Panc1 (cell line): ENCODE measurements at regions of chr3 and their contacts with region 1.

Region 1: GRCh38 chr3:159848348-159849118 is 140.1 kb upstream of the IL12A start:
- DNase-seq: no peak
- ATAC-seq: no peak
- H3K4me3 ChIP-seq: no peak overlapping the region
- H3K27ac ChIP-seq: no peak overlapping the region
- H3K4me1 ChIP-seq: peaks cover 16% of the 10 kb centered on the region
- H3K27me3 ChIP-seq: no peaks in the 10 kb centered on the region
- CTCF ChIP-seq: no peak

Region 2: DNA sequence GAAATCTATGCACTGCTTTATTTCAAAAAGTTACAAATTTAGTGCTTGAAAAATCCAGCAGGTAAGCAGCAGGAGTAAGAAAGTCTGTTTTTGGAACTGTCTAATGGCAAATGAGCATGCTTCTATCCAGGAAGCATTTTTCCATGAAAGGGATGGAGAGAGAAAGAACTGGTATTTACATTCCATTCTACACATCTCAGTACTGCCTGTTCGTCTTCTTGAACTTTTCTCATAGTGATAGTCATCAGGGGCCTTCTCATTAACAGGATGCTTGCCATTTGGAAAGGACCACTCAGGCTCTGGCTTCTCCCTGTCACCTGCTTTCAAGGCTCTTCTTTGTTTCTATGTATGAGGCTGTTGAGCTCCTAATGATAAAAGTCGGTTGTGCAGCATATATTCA is 127.2 kb before region 1 on chr3:
- CTCF ChIA-PET with region 1: no interaction called
- POLR2A ChIA-PET with region 1: no interaction called
- in situ Hi-C with region 1: no loop called
- intact Hi-C with region 1: no loop called
- DNase-seq: no peak
- ATAC-seq: no peak
- H3K4me3 ChIP-seq: no peak overlapping the region
- H3K27ac ChIP-seq: no peak overlapping the region
- H3K4me1 ChIP-seq: peaks cover 2% of the 10 kb centered on the region; the same call in 1 of the 2 replicates
- H3K27me3 ChIP-seq: no peaks in the 10 kb centered on the region
- CTCF ChIP-seq: no peak

Region 3: DNA sequence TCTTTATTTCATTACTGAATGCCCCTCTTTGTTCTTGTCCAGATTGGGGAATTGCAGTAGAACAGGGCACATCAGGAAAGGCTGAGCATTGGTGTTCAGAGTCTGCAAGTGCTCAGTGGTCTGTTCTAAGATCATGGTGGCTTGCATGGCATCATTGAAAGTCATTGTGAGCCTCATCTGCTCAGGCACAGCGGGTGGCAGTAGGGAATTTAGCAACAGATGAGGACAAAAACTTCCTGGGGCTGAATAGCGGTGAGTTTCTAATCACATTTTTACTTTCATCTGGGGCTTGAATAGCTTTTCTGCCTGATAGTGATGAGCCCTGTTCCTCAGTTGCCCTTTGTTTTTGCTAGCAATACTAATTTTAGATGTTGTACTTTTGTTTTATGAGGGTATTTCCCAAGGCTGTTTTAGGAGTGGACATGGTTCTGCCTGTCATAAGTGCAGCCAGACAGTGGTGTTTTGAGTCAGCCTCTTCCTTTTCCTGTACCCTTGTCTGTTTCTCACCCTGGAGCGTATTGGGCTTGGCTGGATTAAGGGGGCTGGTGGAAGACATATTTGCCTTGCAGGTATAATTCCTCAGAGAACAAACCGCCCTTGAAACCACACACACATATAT is 12.9 kb after region 1 on chr3:
- CTCF ChIA-PET with region 1: no interaction called
- POLR2A ChIA-PET with region 1: interaction called, 10 read pairs
- in situ Hi-C with region 1: no loop called
- intact Hi-C with region 1: no loop called
- DNase-seq: no peak
- ATAC-seq: no peak
- H3K4me3 ChIP-seq: no peak overlapping the region
- H3K27ac ChIP-seq: no peak overlapping the region
- H3K4me1 ChIP-seq: peaks cover 10% of the 10 kb centered on the region
- H3K27me3 ChIP-seq: no peaks in the 10 kb centered on the region
- CTCF ChIP-seq: no peak